Sciatic nerve (tissue), 2 donors: ENCODE measurements at regions of chr18 and their contacts with region 1.

Region 1: DNA sequence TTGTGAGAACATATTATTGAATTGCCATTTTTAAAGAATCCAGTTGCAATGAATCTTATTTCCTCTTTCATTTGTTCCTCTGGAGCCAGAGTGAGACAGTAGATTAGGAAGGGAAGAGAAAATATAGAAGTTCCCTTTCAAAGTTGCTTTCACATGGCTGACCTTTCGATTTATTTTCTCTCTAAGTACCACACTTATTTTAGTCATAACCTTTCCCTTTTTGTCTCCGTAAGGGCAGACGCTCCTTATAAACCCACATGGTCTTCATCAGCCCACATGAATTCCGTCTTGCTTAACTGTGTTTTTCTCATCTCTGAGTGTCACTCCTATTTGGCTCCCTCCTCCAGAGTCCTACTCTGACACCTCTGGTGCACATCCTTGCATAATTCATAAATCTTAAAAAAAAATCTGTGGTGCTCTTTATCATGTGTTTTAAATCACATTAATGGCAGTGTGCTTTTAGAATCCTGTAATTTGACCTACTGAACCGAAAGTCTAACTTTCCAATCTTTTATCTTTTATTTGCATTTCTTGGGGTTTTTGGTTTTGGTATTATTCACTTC is 38.5 kb upstream of the ZNF396 start:
- DNase-seq: no peak
- ATAC-seq: peak; percentile 53

Region 2: GRCh38 chr18:35085450-35086380 is 329.9 kb before region 1 on chr18:
- intact Hi-C with region 1: no loop called
- DNase-seq: no peak
- ATAC-seq: peak; percentile 32

Region 3: DNA sequence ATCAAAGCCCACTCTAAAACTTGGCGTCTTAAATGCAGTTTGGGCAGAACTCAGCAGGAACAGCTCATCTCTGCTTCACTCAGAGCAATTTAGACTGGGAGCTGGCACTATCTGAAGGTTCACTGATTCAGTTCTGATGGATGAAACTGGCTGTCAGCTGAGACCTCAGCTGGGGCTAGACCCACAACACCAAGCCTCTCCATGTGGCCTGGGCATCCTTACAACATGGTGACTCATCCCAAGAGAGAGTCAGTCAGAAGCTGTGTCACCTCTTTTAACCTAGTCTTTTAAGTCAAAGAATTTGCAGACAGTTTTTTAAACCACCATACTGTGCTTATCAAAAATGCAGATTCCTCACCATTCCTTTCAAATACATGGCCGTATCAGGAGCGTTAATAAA is 237.3 kb before region 1 on chr18:
- intact Hi-C with region 1: no loop called
- DNase-seq: no peak
- ATAC-seq: no peak

Region 4: GRCh38 chr18:35361570-35362321 is 53.8 kb before region 1 on chr18:
- intact Hi-C with region 1: no loop called
- DNase-seq: no peak
- ATAC-seq: no peak

Region 5: GRCh38 chr18:35580701-35581539 is 165.3 kb after region 1 on chr18:
- intact Hi-C with region 1: loop called (anchors 10 kb)
- DNase-seq: peak; percentile 77
- ATAC-seq: peak; percentile 81